Head of caudate nucleus (tissue), 42 donors: ENCODE measurements at regions of chr15 and their contacts with region 1.

Region 1: GRCh38 chr15:51649659-51650521 is 27.3 kb upstream of the DMXL2 start:
- DNase-seq: peak in 23 of 42 donors; percentile 19 to 84 (median 57)

Region 2: DNA sequence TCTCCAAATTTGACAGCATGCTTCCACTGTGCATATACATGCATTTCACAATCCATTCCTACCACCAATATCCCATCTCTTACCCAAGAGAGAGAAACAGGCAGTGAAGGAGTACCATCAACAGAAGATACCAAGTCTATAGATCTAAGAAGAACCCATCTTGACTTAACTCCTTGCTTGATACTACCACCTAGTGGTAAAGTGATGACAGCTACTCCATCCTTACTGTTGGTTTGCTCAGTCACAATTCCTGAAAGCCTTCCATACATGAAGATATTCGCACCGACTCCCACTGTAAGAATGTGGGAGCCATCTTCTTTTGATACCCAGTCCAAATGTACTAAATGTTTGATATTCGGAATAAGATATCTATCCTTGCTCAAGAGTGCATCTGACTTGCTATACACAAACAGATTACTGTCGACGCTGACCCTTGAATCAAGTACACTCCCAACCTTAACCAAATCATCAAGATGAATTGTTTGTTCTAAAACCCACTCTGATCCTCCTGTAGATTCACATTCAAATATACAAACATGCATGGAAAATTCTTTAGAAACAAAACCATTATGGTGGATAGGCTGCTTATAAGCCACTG is 150.4 kb before region 1 on chr15:
- intact Hi-C with region 1: no loop called
- DNase-seq: peak in 1 of 42 donors; percentile 2

Region 3: GRCh38 chr15:51776952-51777574 is 127.2 kb after region 1 on chr15:
- intact Hi-C with region 1: loop called (anchors 2 kb)
- DNase-seq: peak in 41 of 42 donors; percentile 46 to 92 (median 76)